ENCODE measurements at regions of chr1 and their contacts with region 1.

Region 1: GRCh38 chr1:192516776-192517297 is 58.7 kb upstream of the RGS1 start:
- DNase-seq: peak; percentile 95 to 98 (median 97)
- H3K4me3 ChIP-seq: peak overlapping the region in 6 of 7 experiments; percentile 14 to 43 (median 35)
- H3K27ac ChIP-seq: peak overlapping the region; percentile 27 to 78
- H3K4me1 ChIP-seq: peaks cover 17 to 51% (median 32%) of the 10 kb centered on the region in 4 experiments
- H3K27me3 ChIP-seq: no peaks in the 10 kb centered on the region

Region 2: DNA sequence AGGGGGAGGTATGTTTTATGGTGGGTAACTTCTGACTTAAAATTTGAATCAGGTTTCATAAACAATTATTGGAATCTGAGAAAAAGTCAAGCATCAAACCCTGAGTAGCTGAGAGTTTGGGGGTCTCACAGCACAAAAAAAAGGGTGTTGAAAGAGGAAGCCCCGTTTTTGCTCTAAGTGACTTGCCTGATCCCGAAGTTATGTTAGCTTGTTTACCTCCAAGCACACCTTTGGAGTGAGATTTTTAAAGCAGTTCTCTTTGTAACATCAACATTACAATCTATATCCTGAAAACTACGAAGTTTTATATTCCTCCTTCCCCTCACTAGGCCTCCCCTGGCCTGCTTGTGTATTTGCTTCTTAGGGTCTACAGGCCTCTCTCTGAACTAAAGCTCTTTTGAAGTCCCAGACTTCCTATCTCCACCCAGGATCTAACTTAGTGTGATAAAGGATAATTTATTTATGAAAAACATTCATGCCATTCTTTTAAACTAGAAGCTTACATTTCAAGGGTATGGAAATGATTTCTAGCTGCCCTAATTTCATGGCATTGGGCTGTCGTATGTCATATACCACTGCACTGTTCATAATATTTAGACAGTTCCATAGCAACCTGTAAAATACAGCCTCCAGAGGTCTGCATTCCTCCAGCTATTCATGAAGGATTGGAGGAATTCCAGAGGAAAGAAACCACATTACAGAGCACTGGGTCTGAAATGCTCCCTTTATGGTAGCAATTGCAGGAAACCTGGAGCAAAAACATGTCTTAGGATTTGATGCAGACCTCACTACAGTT is 22.7 kb after region 1 on chr1:
- CTCF ChIA-PET with region 1: interaction called, 13 read pairs
- POLR2A ChIA-PET with region 1: interaction called, 5 read pairs
- DNase-seq: peak in 2 of 3 donors; percentile 40 to 59
- H3K4me3 ChIP-seq: peak overlapping the region in 2 of 7 experiments; percentile 11 to 33
- H3K27ac ChIP-seq: peak overlapping the region; percentile 70 to 81
- H3K4me1 ChIP-seq: peaks cover 9 to 16% (median 10%) of the 10 kb centered on the region in 4 experiments
- H3K27me3 ChIP-seq: no peaks in the 10 kb centered on the region

Region 3: DNA sequence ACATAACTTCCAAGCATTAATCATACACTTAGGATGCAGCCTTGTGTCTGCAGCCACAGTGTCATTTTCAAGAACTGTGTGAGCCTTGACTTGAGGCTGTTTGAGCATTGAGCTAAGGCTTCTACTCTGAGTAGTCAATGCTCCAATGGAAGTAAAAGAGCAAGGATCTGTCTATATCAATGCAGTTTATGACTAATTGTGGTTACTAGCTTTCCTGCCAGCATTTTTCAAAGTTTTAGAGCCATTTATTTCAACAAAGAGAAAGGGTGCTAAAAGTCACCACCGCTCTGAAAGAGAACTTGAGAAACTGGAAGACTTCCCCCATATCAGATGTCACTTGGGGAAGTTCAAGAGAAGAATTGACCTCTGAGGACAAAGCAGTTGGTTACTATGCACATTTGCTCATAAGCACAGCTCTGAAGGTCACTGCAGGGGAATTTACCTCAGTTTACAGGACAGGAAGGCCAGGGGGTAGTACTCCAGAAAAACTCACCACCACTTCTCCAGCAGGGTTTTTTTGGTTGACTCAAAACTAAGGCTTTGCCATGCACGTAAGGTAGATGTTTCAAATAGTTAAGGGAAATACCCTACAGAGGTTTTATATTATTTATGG is 34.2 kb after region 1 on chr1:
- CTCF ChIA-PET with region 1: interaction called, 5 read pairs
- POLR2A ChIA-PET with region 1: interaction called, 17 read pairs
- DNase-seq: peak; percentile 42 to 90 (median 86)
- H3K4me3 ChIP-seq: peak overlapping the region in 1 of 7 experiments; percentile 18
- H3K27ac ChIP-seq: no peak overlapping the region
- H3K4me1 ChIP-seq: peaks cover 17 to 42% (median 28%) of the 10 kb centered on the region in 4 experiments
- H3K27me3 ChIP-seq: no peaks in the 10 kb centered on the region

Region 4: DNA sequence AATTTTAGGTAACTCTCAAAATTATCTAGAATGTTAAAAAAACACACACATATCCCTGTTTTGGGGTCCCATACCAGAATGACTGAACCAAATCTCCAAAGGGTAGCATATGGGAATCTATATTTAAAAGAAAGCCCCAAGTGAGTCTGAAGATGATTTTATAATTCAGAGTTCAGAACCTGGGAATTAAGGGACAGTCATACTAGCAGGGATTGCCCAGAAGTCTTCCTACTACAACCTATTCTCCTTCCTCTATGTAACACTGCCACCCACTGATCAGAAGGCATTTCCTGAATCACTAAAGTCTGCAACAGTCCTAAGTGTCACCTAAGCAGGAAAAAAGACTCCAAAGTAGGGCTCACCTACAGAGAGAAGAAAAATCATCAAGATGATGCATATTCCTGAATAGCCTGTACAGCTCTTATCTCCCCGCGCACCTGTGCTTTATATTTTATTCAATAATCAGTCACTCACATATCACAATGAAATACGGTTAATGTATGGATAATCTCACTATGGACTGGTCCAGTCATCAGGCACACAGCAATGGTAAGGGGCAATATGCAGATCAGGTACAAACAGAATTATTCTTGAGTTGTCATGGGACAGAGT is 63.6 kb after region 1 on chr1:
- CTCF ChIA-PET with region 1: interaction called, 24 read pairs
- POLR2A ChIA-PET with region 1: interaction called, 5 read pairs
- DNase-seq: peak; percentile 50 to 59 (median 52)
- H3K4me3 ChIP-seq: no peak overlapping the region
- H3K27ac ChIP-seq: no peak overlapping the region
- H3K4me1 ChIP-seq: peaks cover 2 to 8% (median 6%) of the 10 kb centered on the region in 4 experiments
- H3K27me3 ChIP-seq: no peaks in the 10 kb centered on the region

Region 5: DNA sequence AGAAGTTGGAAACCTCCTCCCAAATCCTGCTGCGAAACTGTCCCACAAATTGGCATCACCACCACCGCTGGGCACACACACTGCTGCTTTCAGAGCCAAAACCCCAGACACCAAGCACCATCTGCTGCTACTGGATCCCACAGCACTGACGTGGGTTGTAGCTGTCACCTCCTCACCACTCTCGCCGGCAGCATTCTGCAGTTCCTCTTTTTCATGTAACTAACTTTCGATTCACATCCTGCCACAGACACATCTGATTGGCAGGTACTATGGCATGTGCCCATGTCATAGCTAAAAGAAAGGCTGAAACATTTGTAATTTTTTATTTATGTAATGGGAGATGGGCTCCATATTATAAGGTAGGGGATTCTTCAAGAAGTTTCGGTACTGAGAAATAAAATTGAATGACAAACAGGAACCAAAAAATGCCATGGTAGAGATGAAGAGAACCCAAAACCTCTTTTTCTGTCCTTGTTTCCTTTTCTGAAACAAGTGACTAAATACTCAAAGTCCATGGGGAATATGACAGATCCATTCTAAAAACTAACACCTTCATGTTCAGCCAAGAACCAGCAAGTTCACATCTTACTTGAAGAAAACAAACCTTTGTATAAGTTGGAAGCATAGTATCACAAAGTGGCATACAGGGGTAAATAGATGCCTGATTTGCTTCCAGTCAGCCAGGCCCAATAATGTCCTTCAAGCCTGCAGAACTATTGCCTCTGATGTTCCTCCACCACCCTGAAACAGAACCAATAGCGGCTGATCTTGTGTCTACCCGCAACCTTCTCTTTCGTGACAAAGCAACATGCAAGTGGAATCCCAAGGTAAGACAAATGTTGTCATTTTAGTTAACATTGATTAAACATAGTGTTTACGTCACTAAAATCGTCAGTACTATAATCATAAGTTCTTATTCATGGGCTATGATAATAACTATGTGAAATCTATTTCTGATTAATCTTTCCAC is 92.6 kb after region 1 on chr1:
- CTCF ChIA-PET with region 1: interaction called, 9 read pairs
- POLR2A ChIA-PET with region 1: interaction called, 11 read pairs
- DNase-seq: peak; percentile 92 to 99 (median 98)
- H3K4me3 ChIP-seq: no peak overlapping the region
- H3K27ac ChIP-seq: peak overlapping the region; percentile 70 to 78
- H3K4me1 ChIP-seq: peaks cover 11 to 32% (median 23%) of the 10 kb centered on the region in 4 experiments
- H3K27me3 ChIP-seq: no peaks in the 10 kb centered on the region